Activated CD8-positive, alpha-beta memory T cell treated with anti-CD3 and anti-CD28 coated beads, Interleukin-2, amount 10 ng/mL, durations not matched to agents 7 days and 5 days (primary cell): ENCODE measurements at regions of chr6 and their contacts with region 1.

Region 1: DNA sequence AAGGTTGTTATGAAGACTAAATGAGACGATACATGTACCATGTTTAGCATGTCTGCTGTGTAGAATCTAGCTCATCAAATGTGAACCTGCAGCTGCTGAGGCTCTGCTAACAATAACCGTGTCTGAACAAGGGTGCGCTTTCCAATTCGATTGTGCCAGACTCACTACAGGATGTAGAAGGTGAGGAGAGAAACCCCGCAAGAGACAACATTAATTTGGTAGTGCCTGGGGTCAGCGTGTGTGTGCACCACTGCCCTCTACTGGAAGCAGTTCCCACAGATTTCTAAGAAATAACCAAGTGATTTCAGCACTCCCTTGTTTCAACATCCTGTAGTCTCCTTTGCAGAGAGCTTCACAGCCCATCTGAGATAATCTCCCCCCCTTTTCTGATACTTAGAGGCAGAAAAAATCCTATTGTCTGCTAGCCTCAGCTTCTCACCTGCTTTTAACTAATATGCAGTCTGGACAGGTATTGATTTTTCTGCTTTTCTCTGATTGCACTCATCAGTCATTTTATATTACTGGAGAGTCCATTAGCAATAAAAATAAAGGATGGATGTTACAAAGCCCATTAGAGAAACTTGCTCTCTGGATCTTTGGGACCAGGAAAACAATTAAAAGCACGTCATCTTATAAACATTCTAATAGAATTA is 96.7 kb upstream of the BACH2 start:
- DNase-seq: peak; percentile 88
- ATAC-seq: peak; percentile 68
- H3K4me3 Mint-ChIP-seq: no peak overlapping the region
- H3K27ac Mint-ChIP-seq: peak overlapping the region; percentile 30
- H3K4me1 Mint-ChIP-seq: peaks cover 58% of the 10 kb centered on the region
- H3K27me3 Mint-ChIP-seq: peaks cover 4% of the 10 kb centered on the region

Region 2: GRCh38 chr6:90285611-90286381 is 107.6 kb before region 1 on chr6:
- CTCF ChIA-PET with region 1: interaction called, 46 read pairs
- DNase-seq: peak; percentile 86
- ATAC-seq: peak; percentile 69
- H3K4me3 Mint-ChIP-seq: peak overlapping the region; percentile 79
- H3K27ac Mint-ChIP-seq: peak overlapping the region; percentile 93
- H3K4me1 Mint-ChIP-seq: peaks cover 59% of the 10 kb centered on the region
- H3K27me3 Mint-ChIP-seq: peaks cover 10% of the 10 kb centered on the region

Region 3: DNA sequence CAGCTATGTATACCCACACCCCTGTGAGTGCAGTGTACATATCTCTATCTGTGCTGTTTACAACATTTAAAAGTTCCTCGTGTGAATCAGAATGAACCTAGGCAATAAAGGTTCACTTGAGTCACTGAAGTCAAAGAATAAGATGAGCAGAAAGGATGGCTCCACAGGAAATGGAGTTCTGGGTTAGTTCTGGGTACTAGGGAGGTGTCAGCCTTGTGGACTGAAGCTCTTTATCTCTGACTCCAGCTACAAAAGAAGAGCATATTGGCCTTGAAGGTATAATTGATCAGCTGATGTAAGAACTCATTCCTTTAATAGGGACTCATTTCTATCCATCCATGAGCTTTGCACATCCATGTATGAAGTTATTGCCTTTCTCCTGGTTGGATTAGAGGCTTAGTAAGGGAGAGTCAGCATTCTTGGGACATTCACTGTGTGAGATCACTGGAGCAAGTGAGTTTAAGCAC is 22.8 kb before region 1 on chr6:
- CTCF ChIA-PET with region 1: interaction called, 15 read pairs
- DNase-seq: no peak
- ATAC-seq: peak; percentile 50
- H3K4me3 Mint-ChIP-seq: no peak overlapping the region
- H3K27ac Mint-ChIP-seq: peak overlapping the region; percentile 59
- H3K4me1 Mint-ChIP-seq: peaks cover 35% of the 10 kb centered on the region
- H3K27me3 Mint-ChIP-seq: peaks cover 7% of the 10 kb centered on the region

Region 4: GRCh38 chr6:90383196-90383822 is 10.0 kb before region 1 on chr6:
- CTCF ChIA-PET with region 1: interaction called, 16 read pairs
- DNase-seq: peak; percentile 52
- ATAC-seq: peak; percentile 75
- H3K4me3 Mint-ChIP-seq: no peak overlapping the region
- H3K27ac Mint-ChIP-seq: no peak overlapping the region
- H3K4me1 Mint-ChIP-seq: peaks cover 24% of the 10 kb centered on the region
- H3K27me3 Mint-ChIP-seq: peaks cover 22% of the 10 kb centered on the region

Region 5: DNA sequence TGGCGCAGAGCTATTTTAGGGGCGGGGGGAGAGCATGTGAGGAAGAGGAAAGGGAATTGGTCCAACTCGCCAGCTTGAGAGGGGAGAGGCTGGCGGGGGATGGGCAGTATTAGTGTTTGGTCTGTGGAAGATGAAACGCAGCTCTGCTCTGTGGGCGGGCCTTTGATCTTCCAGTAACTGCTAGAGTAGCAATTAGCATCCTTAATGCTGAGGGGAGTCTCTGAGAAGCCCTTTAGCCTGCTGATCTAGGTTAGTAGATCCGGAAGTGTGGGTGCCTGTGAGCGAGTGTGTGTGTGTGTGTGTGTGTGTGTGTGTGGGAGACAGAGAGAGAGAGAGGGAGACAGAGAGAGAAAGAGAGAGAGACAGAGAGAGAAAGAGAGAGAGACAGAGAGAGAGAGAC is 20.5 kb after region 1 on chr6:
- CTCF ChIA-PET with region 1: interaction called, 71 read pairs
- DNase-seq: peak; percentile 93
- ATAC-seq: peak; percentile 85
- H3K4me3 Mint-ChIP-seq: peak overlapping the region; percentile 72
- H3K27ac Mint-ChIP-seq: peak overlapping the region; percentile 97
- H3K4me1 Mint-ChIP-seq: peaks cover 83% of the 10 kb centered on the region
- H3K27me3 Mint-ChIP-seq: peaks cover 3% of the 10 kb centered on the region

Region 6: GRCh38 chr6:90458353-90459224 is 65.2 kb after region 1 on chr6:
- CTCF ChIA-PET with region 1: interaction called, 11 read pairs
- DNase-seq: peak; percentile 91
- ATAC-seq: peak; percentile 91
- H3K4me3 Mint-ChIP-seq: peak overlapping the region; percentile 65
- H3K27ac Mint-ChIP-seq: peak overlapping the region; percentile 93
- H3K4me1 Mint-ChIP-seq: peaks cover 70% of the 10 kb centered on the region
- H3K27me3 Mint-ChIP-seq: no peaks in the 10 kb centered on the region

Region 7: GRCh38 chr6:90478789-90479602 is 85.6 kb after region 1 on chr6:
- CTCF ChIA-PET with region 1: interaction called, 94 read pairs
- DNase-seq: peak; percentile 88
- ATAC-seq: peak; percentile 96
- H3K4me3 Mint-ChIP-seq: no peak overlapping the region
- H3K27ac Mint-ChIP-seq: peak overlapping the region; percentile 74
- H3K4me1 Mint-ChIP-seq: peaks cover 52% of the 10 kb centered on the region
- H3K27me3 Mint-ChIP-seq: peaks cover 6% of the 10 kb centered on the region